Posterior vena cava (tissue), 2 donors: ENCODE measurements at regions of chr10 and their contacts with region 1.

Region 1: GRCh38 chr10:30048768-30049517 is 10.4 kb downstream of the JCAD start:
- DNase-seq: no peak

Region 2: GRCh38 chr10:30059209-30060107 is 10.5 kb after region 1 on chr10 and contains the start of gene JCAD:
- intact Hi-C with region 1: loop called in 1 of 2 experiments (anchors 1 kb)
- DNase-seq: peak; percentile 92
- total RNA-seq, gene JCAD: 94.8 to 113 TPM

Region 3: DNA sequence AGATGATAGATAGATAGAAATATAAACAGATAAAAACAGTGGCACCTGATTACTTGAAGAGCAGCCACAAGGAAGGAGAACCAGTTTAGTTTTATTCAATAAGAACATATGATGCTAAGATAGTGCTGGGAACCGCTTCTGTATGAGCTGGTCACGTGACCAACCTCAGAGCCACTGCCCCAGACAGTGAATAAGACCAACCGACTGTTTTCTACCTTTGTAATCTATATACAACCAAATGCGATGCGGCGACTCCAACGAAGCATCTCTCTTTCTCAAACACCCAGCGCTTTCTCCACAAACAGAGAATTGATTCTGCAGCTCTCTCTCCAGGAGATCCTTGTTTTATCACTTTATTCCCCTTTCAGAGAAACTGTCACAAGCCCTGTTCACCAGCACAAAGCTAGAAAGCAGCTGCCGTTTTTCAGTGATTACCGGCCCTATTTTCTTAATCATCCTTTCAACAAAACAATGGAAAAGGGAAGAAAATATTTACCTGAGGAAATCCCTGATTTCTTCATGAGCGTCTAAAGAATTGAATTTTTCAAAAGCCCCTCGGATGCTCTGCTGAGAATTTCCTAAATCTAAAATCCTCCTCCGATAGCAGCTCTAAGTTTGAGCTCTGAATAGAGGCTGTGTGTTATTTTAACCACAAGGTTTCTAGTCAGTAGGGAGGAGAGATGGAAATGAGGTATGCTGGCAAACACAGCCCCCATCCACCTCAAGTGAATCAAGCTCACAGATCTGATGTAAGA is 66.1 kb after region 1 on chr10:
- intact Hi-C with region 1: loop called in 1 of 2 experiments (anchors 10 kb)
- DNase-seq: no peak